ENCODE measurements at regions of chr14 and their contacts with region 1.

Region 1: DNA sequence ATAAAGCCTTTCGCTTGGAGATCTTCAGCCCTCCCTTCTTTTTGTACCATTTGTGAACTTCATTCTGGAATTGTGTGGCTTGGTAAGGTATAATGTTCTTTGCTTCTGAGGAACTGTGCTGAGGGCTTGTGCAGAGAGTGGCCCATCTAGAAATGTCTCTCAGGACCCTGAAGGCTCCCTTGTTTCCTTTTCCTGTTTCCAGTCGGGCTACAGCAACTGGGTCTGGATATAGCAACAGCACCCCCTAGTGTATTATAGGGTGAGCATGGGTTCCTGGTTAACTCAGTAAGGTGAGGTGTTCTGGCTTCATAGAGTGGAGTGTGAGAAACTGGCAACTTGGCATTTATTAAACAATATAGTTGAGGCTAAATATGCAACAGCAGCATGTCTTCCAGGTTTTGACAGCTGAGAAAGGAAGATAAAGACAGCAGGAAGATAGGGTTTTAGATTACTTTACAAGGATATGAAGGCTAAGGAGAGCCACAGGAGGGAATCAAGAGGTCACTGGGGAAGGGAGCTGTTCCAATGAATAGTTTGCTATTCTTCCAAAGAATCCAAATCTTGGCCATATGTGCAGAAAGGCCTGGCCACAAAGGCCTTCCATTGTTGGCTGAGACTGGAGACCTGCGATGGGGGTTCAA is 49.1 kb upstream of the RNU6-8 start:
- DNase-seq: no peak
- ATAC-seq: peak; percentile 91 to 92
- H3K4me3 ChIP-seq: no peak overlapping the region
- H3K27ac ChIP-seq: no peak overlapping the region
- H3K4me1 ChIP-seq: peaks cover 5% of the 10 kb centered on the region
- H3K27me3 ChIP-seq: no peaks in the 10 kb centered on the region
- CTCF ChIP-seq: peak; percentile 84

Region 2: DNA sequence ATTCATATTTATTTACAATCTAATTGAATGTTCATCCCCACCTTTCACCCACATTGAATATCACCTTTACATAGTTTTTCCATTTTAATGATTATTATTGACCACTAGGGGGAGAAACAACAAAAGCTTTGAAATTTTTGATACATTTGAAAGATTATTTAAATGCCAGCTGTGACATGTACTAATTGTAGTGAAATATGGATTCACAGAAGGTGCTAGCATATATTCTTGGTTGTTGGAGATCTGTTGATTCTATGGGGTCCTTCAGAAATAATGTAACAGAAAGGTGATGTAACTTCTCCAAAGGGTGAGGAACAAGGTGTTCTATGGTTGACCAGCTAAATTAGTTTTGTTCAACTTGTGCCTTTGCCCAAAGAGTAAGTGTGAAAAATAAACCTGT is 741.9 kb before region 1 on chr14:
- intact Hi-C with region 1: loop called (anchors 10 kb)
- DNase-seq: no peak
- ATAC-seq: no peak
- H3K4me3 ChIP-seq: no peak overlapping the region
- H3K27ac ChIP-seq: no peak overlapping the region
- H3K4me1 ChIP-seq: peaks cover 9% of the 10 kb centered on the region
- H3K27me3 ChIP-seq: no peaks in the 10 kb centered on the region
- CTCF ChIP-seq: peak; percentile 62

Region 3: DNA sequence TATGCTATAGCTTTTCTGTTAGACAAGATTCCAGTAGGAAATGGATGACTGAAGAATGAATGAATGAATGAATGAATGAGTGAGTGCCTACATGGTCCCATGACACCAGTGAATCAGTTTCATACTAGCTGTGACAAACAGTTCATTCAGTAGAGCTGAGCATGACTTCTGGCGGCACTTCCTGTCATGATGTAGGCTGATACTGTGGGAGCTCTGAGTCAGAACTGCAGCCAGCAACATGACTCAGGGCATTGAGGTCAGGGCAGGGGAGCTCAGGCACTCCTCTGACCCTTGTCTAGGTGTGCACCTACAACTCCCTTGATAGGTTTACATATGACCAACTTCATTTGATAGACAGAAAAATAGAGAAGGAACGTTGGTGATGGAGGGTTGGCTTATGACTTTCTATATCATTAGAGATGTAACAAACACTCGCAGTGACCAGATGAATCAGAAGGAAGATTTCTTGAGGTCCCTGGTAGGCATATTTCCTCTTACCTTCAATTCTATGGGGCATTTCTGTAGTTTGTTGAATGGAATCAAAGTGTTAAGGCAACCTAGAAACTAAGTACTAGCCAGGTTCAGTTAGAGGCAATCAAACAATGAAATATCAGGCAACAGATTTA is 314.3 kb before region 1 on chr14:
- intact Hi-C with region 1: loop called (anchors 10 kb)
- DNase-seq: no peak
- ATAC-seq: peak; percentile 57 to 73
- H3K4me3 ChIP-seq: no peak overlapping the region
- H3K27ac ChIP-seq: no peak overlapping the region
- H3K4me1 ChIP-seq: no peaks in the 10 kb centered on the region
- H3K27me3 ChIP-seq: no peaks in the 10 kb centered on the region
- CTCF ChIP-seq: no peak

Region 4: GRCh38 chr14:32073537-32074189 is 178.5 kb before region 1 on chr14:
- intact Hi-C with region 1: loop called (anchors 5 kb)
- DNase-seq: no peak
- ATAC-seq: no peak
- H3K4me3 ChIP-seq: no peak overlapping the region
- H3K27ac ChIP-seq: no peak overlapping the region
- H3K4me1 ChIP-seq: peaks cover 21% of the 10 kb centered on the region
- H3K27me3 ChIP-seq: no peaks in the 10 kb centered on the region
- CTCF ChIP-seq: peak; percentile 77

Region 5: GRCh38 chr14:32329146-32329545 is 77.0 kb after region 1 on chr14 and contains the start of gene AKAP6:
- intact Hi-C with region 1: no loop called
- DNase-seq: no peak
- ATAC-seq: no peak
- H3K4me3 ChIP-seq: no peak within 1 kb of the TSS
- H3K27ac ChIP-seq: no peak within 1 kb of the TSS
- H3K4me1 ChIP-seq: no peaks in the 10 kb centered on the region
- H3K27me3 ChIP-seq: no peaks in the 10 kb centered on the region
- CTCF ChIP-seq: no peak
- total RNA-seq, gene AKAP6: 8.6 TPM

Region 6: DNA sequence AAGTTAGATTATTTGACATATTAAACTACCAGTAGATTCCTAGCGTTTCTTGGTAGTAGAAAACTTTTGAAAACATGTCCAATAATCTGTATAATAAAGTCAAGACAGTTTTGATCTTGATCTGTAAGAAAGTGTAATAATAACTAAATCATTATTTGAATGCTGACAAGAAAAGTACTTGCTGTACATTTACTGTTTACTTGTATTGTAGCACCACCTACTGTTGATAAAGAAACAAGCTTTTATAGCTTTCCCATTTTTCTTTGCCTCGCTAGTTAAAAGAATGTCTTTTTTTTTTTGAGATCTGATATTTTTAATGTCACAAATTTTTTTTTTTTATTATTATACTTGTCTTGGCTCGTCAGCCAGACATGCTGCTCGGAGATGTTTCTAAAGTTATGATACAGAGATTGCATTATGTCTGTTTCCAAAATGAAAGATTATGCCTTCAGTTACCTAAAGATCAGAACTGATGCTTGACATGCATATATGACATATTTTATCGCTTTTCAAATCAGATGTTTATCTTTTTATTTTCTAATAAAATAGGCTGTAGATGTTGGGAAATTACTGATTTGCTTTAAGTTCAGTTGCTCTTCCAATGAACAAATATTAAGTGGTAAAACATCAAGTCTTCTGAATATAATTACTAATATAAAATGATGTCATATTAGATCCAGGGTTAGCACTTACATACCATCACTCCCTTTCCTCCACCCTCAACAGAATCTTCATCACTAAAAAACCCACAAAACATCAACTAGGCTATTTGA is 217.4 kb after region 1 on chr14:
- intact Hi-C with region 1: loop called (anchors 5 kb)
- DNase-seq: no peak
- ATAC-seq: peak in 1 of 2 donors; percentile 49
- H3K4me3 ChIP-seq: no peak overlapping the region
- H3K27ac ChIP-seq: no peak overlapping the region
- H3K4me1 ChIP-seq: peaks cover 5% of the 10 kb centered on the region
- H3K27me3 ChIP-seq: no peaks in the 10 kb centered on the region
- CTCF ChIP-seq: peak; percentile 39